Endothelial cell of umbilical vein (primary cell): ENCODE measurements at regions of chr6 and their contacts with region 1.

Region 1: DNA sequence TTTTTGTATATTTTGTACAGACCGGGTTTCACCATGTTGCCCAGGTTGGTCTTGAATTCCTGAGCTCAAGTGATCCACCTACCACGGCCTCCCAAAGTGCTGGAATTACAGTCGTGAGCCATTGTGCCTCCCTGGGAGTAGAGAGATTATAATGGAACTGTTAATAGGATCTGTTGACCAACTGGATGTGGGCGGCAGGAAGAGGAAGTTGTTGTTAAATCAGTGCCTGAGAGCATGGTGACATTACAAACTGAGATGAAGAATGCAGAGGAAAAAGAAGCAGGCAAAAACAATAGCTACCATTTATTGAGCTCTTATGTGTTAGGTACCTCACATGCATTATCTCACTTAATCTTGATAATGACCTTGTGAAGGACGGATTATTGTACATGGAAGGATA is 9.2 kb upstream of the L3MBTL3 start:
- DNase-seq: peak; percentile 46
- H3K4me3 ChIP-seq: no peak overlapping the region
- H3K27ac ChIP-seq: peak overlapping the region; percentile 94
- H3K4me1 ChIP-seq: peaks cover 28% of the 10 kb centered on the region
- H3K27me3 ChIP-seq: no peaks in the 10 kb centered on the region
- CTCF ChIP-seq: no peak
- POLR2A ChIP-seq: peak; percentile 10

Region 2: DNA sequence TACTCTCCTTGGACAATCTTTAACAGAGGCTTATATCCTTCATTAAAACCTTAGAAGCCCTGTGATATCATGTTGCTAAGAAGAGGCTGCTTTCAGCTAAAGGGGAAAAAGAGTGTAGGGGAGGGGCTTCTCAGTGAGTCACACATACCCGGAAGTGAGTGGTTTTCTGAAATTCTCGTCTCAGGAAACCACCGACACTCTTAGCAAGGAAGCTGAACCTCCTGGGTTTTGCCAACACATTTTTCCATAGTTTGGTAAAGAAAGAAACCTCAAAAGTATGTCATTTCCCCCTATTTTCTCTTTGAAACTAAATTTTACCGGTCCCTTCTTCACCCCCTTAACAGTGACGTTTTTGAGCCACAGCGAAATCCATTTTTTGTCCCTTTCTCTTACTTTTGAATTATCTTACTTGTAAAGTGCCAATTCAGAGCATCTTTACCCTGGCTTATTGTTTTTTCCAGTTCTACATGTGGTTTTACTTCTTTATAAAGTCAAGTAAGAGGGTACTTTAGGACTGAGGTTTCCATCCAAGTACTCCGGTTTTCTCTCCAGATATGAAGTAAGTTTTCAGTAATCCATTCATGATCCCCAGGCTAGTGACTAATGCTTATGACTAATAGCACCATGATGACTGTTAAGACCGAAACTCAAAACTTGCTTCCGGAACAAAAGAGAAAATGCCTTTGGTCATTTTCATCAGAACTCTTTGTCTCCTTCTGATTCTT is 518.5 kb before region 1 on chr6:
- CTCF ChIA-PET with region 1: no interaction called
- POLR2A ChIA-PET with region 1: no interaction called
- dilution Hi-C with region 1: no loop called
- intact Hi-C with region 1: loop called (anchors 1 kb)
- DNase-seq: peak; percentile 95
- H3K4me3 ChIP-seq: peak overlapping the region; percentile 11 to 83 (median 41)
- H3K27ac ChIP-seq: peak overlapping the region; percentile 99
- H3K4me1 ChIP-seq: peaks cover 51% of the 10 kb centered on the region
- H3K27me3 ChIP-seq: no peaks in the 10 kb centered on the region
- CTCF ChIP-seq: no peak
- POLR2A ChIP-seq: peak; percentile 81